Thyroid gland (tissue), 4 donors: ENCODE measurements at regions of chr20 and their contacts with region 1.

Region 1: GRCh38 chr20:47389867-47390347 is 33.4 kb upstream of the ZMYND8 start:
- DNase-seq: no peak
- H3K4me3 ChIP-seq: no peak overlapping the region
- H3K27ac ChIP-seq: no peak overlapping the region
- H3K4me1 ChIP-seq: no peaks in the 10 kb centered on the region
- H3K27me3 ChIP-seq: no peaks in the 10 kb centered on the region
- CTCF ChIP-seq: no peak
- POLR2A ChIP-seq: no peak

Region 2: GRCh38 chr20:46757754-46758678 is 631.9 kb before region 1 on chr20:
- intact Hi-C with region 1: loop called (anchors 10 kb)
- DNase-seq: peak; percentile 52 to 58
- H3K4me3 ChIP-seq: no peak overlapping the region
- H3K27ac ChIP-seq: no peak overlapping the region
- H3K4me1 ChIP-seq: peaks cover 0 to 5% of the 10 kb centered on the region in 2 donors
- H3K27me3 ChIP-seq: no peaks in the 10 kb centered on the region
- CTCF ChIP-seq: peak; percentile 86 to 99 (median 92)
- POLR2A ChIP-seq: no peak

Region 3: DNA sequence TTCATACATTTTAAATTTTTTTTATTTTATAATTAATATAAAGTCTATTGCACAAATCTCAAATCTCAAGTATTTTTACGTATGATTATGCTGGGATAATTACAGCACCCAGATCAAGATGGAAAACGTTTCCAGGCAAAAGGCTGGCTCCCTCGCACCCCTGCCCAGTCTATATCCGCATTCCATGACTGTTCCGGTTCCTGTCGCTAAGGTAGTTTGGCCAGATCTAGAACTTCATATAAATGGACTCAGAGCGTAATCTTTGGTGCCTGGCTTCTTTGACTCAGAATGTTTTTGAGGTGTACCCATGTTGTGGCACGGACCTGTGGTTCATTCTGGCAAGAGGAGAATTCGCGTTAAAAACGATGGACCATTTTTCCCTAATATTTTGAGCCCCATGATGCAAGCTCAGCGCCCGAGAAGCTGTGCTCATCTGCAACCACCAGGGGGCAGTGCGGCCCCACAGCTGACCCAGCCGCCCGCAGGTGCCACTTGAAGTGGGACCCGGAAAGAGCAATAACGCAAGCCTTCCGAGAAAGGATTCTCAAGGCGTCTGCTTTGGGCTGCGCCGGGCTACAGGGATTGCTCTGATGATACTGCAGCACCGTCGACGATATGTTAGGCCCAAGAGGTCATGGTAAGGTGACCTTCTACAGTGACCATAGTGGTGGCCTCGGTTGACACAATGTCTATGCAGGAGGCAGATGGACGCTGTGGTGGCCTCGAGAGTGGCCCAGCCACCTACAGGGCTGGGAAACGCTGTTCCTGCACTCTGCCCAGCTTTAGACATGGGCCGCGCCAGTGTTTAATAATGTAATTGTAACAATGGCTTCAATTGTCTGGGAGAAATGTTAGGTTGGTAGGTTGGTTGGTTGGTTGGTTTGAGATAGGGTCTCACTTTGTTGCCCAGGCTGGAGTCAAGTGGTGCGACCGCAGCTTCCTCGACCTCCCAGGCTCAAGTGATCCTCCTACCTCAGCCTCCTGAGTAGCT is 193.5 kb before region 1 on chr20:
- intact Hi-C with region 1: loop called (anchors 5 kb)
- DNase-seq: peak; percentile 72 to 82
- H3K4me3 ChIP-seq: no peak overlapping the region
- H3K27ac ChIP-seq: no peak overlapping the region
- H3K4me1 ChIP-seq: peaks cover 0 to 7% of the 10 kb centered on the region in 2 donors
- H3K27me3 ChIP-seq: no peaks in the 10 kb centered on the region
- CTCF ChIP-seq: peak; percentile 93 to 98 (median 95)
- POLR2A ChIP-seq: no peak

Region 4: DNA sequence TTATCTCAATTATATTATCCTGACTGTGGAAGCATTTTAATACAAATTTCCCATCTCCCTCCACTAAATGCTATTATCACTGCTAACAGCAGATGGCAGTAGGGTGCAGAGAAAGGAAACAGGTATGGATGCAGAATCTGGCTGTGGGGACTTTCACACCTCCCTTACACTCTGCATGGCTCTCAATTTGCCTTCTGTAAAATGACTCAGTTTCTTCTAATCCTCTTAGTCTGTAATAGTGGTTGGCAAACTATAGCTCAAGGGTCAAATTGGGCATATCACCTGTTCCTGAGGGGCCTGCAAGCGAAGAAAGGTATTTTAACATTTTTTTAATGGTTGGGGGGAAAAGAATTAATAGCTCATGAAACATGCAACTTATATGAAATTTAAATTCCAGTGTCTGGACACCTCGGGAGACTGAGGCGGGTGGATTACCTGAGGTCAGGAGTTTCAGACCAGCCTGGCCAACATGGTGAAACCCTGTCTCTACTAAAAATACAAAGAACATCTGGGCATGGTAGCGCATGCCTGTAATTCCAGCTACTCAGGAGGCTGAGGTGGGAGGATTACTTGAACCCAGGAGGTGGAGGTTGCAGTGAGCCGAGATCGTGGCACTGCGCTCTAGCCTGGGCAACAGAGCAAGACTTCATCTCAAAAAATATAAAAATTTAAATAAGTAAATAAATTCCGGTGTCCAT is 116.9 kb before region 1 on chr20:
- intact Hi-C with region 1: loop called (anchors 2 kb)
- DNase-seq: peak; percentile 29 to 33
- H3K4me3 ChIP-seq: no peak overlapping the region
- H3K27ac ChIP-seq: peak overlapping the region; percentile 63 to 82 (median 72)
- H3K4me1 ChIP-seq: peaks cover 40 to 52% of the 10 kb centered on the region in 2 donors
- H3K27me3 ChIP-seq: no peaks in the 10 kb centered on the region
- CTCF ChIP-seq: peak; percentile 71 to 99 (median 91)
- POLR2A ChIP-seq: no peak

Region 5: DNA sequence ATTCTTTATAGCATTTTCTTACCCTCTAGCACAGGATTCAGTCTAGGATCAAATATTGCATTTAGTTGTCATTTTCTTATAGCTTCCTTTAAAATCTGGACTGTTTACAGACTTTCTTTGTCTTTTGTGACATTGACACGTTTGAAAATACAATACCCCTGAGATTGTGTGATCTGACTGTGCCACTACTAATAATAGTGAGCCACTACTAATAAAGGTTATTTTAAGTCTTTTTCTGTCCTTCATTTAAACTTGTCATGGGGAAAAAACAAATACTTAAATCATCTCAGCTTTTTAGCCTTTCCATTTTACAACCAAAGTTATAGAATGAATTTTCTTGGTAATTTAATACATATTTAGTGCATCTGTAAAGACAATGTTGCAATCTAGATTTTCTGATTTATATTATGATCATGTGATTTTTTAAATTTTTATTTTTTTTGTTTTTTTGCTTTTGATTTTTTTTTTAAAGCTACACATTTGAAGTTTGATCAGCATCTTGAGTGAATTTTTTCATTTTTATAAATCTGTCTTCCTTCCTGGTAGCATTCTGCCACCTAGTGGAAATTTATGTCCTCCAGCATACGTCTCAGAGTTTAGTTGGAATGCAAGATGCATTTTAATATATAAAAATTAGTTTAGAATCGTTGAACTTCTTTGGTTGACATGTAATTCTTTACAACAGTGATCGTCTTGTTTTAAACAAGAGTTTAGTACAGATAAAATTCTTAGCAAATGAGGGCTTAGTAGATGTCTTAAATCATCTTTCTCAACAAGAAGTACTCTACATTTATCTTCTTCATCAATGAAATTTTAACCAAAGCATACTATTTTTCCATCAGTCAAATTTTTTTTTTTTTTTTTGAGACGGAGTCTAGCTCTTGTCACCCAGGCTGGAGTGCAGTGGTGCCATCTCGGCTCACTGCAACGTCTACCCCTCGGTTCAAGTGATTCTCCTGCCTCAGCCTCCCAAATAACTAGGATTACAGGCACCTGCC is 231.2 kb after region 1 on chr20:
- intact Hi-C with region 1: loop called (anchors 10 kb)
- DNase-seq: no peak
- H3K4me3 ChIP-seq: no peak overlapping the region
- H3K27ac ChIP-seq: no peak overlapping the region
- H3K4me1 ChIP-seq: no peaks in the 10 kb centered on the region
- H3K27me3 ChIP-seq: no peaks in the 10 kb centered on the region
- CTCF ChIP-seq: peak; percentile 51 to 94 (median 78)
- POLR2A ChIP-seq: no peak